CD4-positive, alpha-beta T cell (primary cell): ENCODE measurements at regions of chr1 and their contacts with region 1.

Region 1: DNA sequence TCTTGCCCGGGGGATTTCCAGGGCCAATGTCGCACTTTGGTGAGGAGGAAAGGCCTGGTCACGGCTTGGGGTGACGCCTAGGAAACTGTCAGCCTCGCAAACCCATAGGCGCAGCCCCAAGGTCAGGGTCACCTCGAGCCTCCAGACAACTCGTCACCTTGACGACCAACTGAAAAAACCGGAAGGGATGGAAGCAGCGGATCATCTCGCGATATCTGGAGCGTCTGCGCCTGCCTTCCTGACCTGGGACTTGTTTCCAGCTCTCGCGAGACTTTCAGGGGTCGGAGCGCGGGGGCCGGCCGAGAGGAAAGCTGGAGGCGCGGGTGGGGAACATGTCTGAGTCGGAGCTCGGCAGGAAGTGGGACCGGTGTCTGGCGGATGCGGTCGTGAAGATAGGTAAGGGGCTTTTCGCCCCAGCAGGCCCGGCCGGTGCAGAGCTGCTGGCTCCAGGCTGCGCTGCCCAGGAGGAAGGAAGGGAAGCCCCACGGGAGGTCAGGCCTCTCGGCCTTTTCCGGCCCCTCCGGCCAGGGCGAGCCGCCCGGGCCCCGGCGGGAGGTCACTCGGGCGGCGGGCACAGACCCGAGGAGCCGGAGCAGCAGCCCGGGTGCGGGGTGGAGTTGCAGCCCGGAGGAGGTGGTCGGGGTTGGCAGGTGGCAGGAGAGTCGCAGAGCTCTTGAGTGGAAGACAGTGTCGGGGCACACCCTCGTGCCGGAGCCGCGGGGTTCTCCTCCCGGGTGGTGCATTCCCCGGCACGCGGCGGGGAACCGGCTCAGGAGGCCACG is 47.2 kb upstream of the NBL1 start:
- DNase-seq: peak; percentile 92 to 100 (median 94)
- ATAC-seq: peak; percentile 63
- H3K4me3 ChIP-seq: peak overlapping the region; percentile 90
- H3K4me3 Mint-ChIP-seq: peak overlapping the region; percentile 96
- H3K27ac ChIP-seq: peak overlapping the region; percentile 100
- H3K27ac Mint-ChIP-seq: peak overlapping the region; percentile 100
- H3K4me1 ChIP-seq: peaks cover 55% of the 10 kb centered on the region
- H3K4me1 Mint-ChIP-seq: peaks cover 49% of the 10 kb centered on the region
- H3K27me3 ChIP-seq: no peaks in the 10 kb centered on the region
- H3K27me3 Mint-ChIP-seq: no peaks in the 10 kb centered on the region
- CTCF ChIP-seq: no peak

Region 2: DNA sequence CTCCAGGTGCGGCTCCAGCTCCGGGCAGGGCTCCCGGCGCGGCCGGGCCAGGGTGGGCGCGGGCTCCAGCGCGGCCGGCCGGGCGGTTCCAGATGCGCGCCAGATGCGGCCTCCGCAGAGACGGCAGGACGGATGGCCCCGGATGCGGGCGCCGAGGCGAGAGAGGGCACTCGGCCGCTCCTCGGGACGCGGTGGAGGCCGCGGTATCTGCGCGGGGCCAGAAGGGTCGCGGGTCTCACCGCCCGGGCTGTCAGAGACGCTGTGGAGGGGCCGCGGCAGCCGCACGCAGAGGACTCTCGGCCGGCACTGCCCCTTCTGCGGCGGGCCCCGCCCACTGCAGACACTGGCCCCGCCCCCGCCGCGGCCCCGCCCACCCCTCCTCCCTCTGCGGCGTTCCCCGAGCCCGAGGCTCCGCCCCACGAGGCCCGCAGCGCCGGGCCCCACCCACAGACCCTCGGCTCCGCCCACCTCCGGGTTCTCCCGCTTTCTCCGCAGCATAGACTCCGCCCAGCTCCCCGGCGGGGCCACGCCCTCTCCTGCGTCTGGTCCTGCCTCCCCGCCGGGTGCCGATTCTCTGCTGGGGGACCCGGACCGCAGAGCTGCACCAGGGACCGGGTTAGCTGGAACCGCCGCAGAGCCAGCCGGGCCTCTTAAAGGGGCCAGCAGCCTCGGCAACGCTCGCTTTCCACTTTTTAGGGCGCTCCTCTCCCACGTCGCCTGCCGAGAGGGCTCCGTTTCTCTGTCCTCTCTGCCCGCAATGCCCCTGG is 640.4 kb before region 1 on chr1 and contains the start of gene IFFO2:
- CTCF ChIA-PET with region 1: no interaction called
- POLR2A ChIA-PET with region 1: interaction called, 4 read pairs
- intact Hi-C with region 1: loop called in 1 of 2 experiments (anchors 5 kb)
- DNase-seq: peak in 13 of 14 experiments; percentile 97 to 100 (median 98)
- ATAC-seq: peak; percentile 76
- H3K4me3 ChIP-seq: peak within 1 kb of the TSS; percentile 83
- H3K4me3 Mint-ChIP-seq: peak within 1 kb of the TSS; percentile 99
- H3K27ac ChIP-seq: peak within 1 kb of the TSS in 1 of 2 donors; percentile 74
- H3K27ac Mint-ChIP-seq: peak within 1 kb of the TSS; percentile 99
- H3K4me1 ChIP-seq: peaks cover 59% of the 10 kb centered on the region
- H3K4me1 Mint-ChIP-seq: peaks cover 65% of the 10 kb centered on the region
- H3K27me3 ChIP-seq: no peaks in the 10 kb centered on the region
- H3K27me3 Mint-ChIP-seq: no peaks in the 10 kb centered on the region
- CTCF ChIP-seq: no peak
- total RNA-seq, gene IFFO2: 106 to 112 TPM

Region 3: DNA sequence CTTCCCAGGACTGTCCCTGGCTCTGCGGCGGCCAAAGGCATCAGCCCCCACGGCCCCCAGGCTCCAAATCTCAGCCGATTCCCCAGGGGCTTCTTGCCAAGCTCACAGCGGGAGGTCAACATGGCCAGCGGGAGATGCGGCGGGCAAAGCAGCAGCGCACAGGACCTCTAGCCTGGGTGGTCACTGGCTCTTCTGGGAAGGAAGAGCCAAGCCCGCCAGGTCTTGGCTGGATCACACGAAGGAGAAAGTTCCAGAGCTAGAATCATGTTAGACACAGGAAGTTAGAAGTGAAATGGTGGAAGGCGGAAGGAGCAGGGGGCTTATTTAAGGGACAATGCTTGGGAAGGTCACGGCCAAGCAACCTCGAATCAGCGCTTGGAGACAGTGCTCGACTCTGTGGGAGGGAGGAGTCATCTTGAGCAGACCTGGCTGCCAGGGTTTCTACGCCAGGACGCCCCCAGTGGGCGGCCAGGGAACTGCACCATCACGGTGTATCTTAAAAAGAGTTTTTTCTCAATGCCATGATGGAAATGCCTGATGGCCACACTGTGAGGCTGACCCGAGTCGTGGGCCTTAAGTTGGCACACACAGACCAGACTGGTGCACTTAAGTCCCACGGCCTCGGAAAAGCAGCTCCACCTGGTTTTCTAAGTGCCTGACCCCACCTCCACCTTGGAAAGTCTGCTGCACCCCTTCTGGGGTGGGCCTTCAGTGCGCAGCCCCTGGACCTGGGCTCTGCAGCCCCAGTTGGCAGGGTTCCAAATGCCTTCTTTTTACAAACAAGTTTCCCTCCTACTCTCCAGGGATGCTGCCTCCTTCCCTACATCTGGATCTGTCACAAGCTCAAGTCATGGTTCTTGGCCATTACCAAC is 255.5 kb before region 1 on chr1:
- CTCF ChIA-PET with region 1: no interaction called
- POLR2A ChIA-PET with region 1: interaction called, 3 read pairs
- intact Hi-C with region 1: loop called in 1 of 2 experiments (anchors 5 kb)
- DNase-seq: peak; percentile 58 to 85 (median 71)
- ATAC-seq: peak; percentile 89
- H3K4me3 ChIP-seq: no peak overlapping the region
- H3K4me3 Mint-ChIP-seq: no peak overlapping the region
- H3K27ac ChIP-seq: no peak overlapping the region
- H3K27ac Mint-ChIP-seq: peak overlapping the region; percentile 37
- H3K4me1 ChIP-seq: peaks cover 8% of the 10 kb centered on the region
- H3K4me1 Mint-ChIP-seq: peaks cover 6% of the 10 kb centered on the region
- H3K27me3 ChIP-seq: no peaks in the 10 kb centered on the region
- H3K27me3 Mint-ChIP-seq: no peaks in the 10 kb centered on the region
- CTCF ChIP-seq: peak; percentile 87

Region 4: DNA sequence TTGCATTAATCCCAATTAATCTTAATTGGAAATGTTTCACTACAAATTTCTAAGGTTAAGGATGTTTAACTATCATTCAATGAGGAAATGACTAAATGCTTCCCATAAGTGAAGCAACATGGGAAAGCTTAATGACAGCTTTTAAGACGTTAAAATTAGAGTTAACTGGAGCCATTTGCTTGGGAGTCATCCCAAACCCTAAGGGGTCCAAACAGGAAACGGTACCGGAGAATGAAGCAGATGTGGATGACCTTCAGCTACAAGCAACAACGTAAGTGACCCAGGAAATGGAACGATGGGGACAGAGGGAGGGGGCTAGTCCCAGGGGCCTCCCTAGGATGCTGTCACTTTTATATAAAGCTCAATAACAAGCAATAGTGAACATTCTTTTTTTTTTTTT is 173.8 kb before region 1 on chr1:
- CTCF ChIA-PET with region 1: no interaction called
- POLR2A ChIA-PET with region 1: no interaction called
- intact Hi-C with region 1: no loop called
- DNase-seq: no peak
- ATAC-seq: no peak
- H3K4me3 ChIP-seq: no peak overlapping the region
- H3K4me3 Mint-ChIP-seq: no peak overlapping the region
- H3K27ac ChIP-seq: no peak overlapping the region
- H3K27ac Mint-ChIP-seq: peak overlapping the region; percentile 80
- H3K4me1 ChIP-seq: peaks cover 63% of the 10 kb centered on the region
- H3K4me1 Mint-ChIP-seq: peaks cover 88% of the 10 kb centered on the region
- H3K27me3 ChIP-seq: no peaks in the 10 kb centered on the region
- H3K27me3 Mint-ChIP-seq: no peaks in the 10 kb centered on the region
- CTCF ChIP-seq: no peak

Region 5: DNA sequence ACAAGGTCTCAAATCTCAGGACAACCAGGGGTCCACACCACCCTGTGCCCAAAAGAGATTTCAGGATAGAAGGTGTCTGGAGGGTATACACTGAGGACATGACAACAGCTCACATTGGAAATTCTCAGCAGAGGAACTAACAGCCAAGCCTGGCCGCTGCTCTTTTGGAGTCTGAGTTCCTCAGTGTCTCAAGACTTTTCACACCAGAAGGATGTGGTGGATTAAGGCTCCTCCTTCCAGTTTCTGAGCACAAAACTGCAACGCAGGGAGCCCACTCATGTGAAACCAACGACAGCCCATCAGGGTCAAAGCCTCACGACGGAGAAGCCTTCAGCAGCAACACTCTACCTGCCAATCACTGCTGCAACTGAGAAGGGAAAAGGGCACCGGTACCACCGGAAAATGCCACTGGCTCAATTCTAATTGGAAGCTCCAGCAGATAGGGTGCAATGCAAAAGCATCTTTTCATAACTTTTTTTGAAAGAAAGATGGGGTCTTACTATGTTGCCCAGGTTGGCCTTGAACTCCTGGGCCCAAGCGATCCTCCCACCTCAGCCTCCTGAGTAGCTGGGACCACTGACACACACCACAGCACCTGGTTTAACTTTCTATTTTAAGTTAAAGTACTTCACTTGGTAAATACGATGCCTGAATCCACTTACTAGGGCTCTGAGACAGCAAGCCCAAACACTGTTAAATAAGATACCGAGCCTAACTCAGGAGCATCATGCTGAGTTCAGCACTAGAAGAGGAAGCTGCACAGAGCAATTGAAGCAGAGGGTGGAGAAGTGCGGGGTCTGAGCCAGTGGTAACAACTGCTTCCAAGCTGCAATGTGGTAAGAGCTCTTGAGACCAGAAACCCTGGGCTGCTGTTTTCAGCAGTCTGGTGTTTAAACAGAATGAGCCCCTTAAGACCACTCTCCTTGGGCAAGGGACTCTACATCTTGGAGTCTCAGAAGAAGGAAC is 119.3 kb before region 1 on chr1:
- CTCF ChIA-PET with region 1: no interaction called
- POLR2A ChIA-PET with region 1: interaction called, 13 read pairs
- intact Hi-C with region 1: no loop called
- DNase-seq: peak in 5 of 14 experiments; percentile 26 to 83 (median 57)
- ATAC-seq: peak; percentile 59
- H3K4me3 ChIP-seq: peak overlapping the region; percentile 41
- H3K4me3 Mint-ChIP-seq: peak overlapping the region; percentile 89
- H3K27ac ChIP-seq: peak overlapping the region; percentile 74 to 81
- H3K27ac Mint-ChIP-seq: peak overlapping the region; percentile 86
- H3K4me1 ChIP-seq: peaks cover 99% of the 10 kb centered on the region
- H3K4me1 Mint-ChIP-seq: peaks cover 95% of the 10 kb centered on the region
- H3K27me3 ChIP-seq: no peaks in the 10 kb centered on the region
- H3K27me3 Mint-ChIP-seq: no peaks in the 10 kb centered on the region
- CTCF ChIP-seq: no peak

Region 6: GRCh38 chr1:19606817-19607642 is 10.1 kb after region 1 on chr1:
- CTCF ChIA-PET with region 1: interaction called, 6 read pairs
- POLR2A ChIA-PET with region 1: interaction called, 43 read pairs
- intact Hi-C with region 1: no loop called
- DNase-seq: peak in 11 of 14 experiments; percentile 17 to 81 (median 30)
- ATAC-seq: peak; percentile 72
- H3K4me3 ChIP-seq: peak overlapping the region; percentile 12
- H3K4me3 Mint-ChIP-seq: peak overlapping the region; percentile 56
- H3K27ac ChIP-seq: peak overlapping the region in 1 of 2 donors; percentile 38
- H3K27ac Mint-ChIP-seq: peak overlapping the region; percentile 100
- H3K4me1 ChIP-seq: peaks cover 37% of the 10 kb centered on the region
- H3K4me1 Mint-ChIP-seq: peaks cover 63% of the 10 kb centered on the region
- H3K27me3 ChIP-seq: no peaks in the 10 kb centered on the region
- H3K27me3 Mint-ChIP-seq: no peaks in the 10 kb centered on the region
- CTCF ChIP-seq: no peak

Region 7: DNA sequence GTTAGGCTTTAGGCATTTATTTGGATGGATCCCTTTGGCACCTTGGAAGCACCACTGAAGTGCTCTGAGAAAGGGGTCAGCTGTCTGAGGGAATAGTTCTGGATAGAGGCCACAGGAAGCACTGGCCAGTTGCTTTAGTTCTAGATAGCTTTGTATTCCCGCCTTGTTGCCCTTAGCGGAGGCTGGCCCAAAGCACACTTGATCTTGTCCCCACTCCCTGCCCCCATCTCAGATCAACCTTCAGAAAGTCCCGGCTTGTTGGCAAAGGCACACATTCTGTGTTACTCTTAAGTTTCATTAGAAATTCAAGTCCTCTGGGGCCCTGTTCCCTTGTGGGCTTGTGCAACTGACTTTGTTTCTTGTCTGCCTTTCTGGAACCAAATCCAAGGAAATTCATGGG is 32.0 kb after region 1 on chr1:
- CTCF ChIA-PET with region 1: no interaction called
- POLR2A ChIA-PET with region 1: interaction called, 11 read pairs
- intact Hi-C with region 1: no loop called
- DNase-seq: no peak
- ATAC-seq: no peak
- H3K4me3 ChIP-seq: no peak overlapping the region
- H3K4me3 Mint-ChIP-seq: no peak overlapping the region
- H3K27ac ChIP-seq: no peak overlapping the region
- H3K27ac Mint-ChIP-seq: no peak overlapping the region
- H3K4me1 ChIP-seq: no peaks in the 10 kb centered on the region
- H3K4me1 Mint-ChIP-seq: no peaks in the 10 kb centered on the region
- H3K27me3 ChIP-seq: no peaks in the 10 kb centered on the region
- H3K27me3 Mint-ChIP-seq: no peaks in the 10 kb centered on the region
- CTCF ChIP-seq: no peak